Endothelial cell of umbilical vein (primary cell): ENCODE measurements at regions of chr16 and their contacts with region 1.

Region 1: DNA sequence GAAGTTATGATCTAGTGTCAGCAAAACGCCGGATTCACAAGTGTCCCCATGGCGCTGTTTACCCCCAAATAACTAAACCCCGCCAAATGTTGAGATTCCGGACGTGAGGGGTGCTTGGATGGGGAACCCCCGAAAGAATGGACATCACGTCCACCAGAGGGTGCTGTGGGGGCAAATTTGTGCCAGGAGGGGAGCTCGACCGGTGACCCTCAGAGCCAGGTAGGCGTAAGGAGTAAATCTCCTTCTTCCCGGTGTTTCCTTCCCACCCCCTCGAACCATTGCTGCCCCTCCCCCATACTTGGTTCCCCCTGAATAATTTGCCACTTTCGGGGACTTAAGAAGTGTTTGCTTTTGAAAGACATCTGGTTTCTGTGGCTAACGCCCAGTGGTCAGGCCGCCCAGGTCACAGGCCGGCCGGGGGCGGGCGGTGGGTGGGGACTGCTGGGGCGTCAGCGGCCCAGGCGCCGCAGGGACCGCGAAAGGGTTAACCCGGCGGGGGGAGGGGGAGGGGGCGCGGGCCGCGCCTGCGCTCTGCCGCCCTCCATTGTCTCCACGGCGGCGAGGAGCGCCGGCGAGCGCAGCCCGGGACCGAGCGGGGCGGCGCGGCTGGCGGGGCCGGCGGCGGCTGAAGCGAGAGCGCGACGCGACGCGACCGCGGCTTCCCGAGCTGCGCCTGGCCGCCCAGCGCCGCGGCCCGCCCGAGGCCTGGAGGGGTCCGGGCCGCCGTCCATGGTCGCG is at the start of gene ZNRF1:
- DNase-seq: peak; percentile 83
- H3K4me3 ChIP-seq: peak within 1 kb of the TSS; percentile 61 to 82 (median 63)
- H3K27ac ChIP-seq: peak within 1 kb of the TSS; percentile 23
- H3K4me1 ChIP-seq: peaks cover 21% of the 10 kb centered on the region
- H3K27me3 ChIP-seq: no peaks in the 10 kb centered on the region
- CTCF ChIP-seq: peak; percentile 55 to 72
- POLR2A ChIP-seq: peak; percentile 75
- total RNA-seq, gene ZNRF1: 33.2 and 34.9 TPM in 2 replicates

Region 2: DNA sequence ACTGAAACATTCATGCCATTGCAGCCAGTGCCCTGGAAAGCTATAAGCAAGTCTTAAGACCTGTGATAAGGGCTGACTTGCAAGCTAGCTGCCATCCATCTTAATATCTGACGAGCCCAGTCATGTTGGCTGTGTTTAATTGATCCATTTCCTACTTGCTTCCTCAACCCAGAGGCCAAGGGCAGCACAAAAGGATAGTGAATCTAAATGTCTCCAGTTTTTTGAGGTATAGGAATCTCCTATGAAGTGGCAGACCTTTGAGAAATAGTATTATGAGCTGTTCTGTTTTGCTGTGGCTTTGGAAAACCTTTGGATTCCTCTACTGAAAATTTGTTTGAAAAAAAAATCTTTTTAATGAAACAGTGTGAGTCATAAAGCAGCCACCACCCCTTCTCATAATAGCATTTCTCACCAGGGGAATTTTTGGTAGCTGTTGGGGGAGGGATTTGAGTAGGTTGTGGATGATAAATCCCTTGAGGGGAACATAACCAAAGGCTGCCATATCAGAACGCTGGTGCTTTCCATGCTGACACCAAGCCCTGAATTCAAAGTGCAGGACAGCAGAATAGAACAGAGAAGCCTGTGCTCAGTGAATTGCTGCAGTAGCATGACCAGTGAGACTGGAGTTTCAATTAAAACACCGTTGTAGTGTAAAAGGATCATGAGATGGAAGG is 13.1 kb after region 1 on chr16:
- CTCF ChIA-PET with region 1: interaction called, 39 read pairs
- POLR2A ChIA-PET with region 1: no interaction called
- dilution Hi-C with region 1: no loop called
- intact Hi-C with region 1: loop called (anchors 1 kb)
- DNase-seq: peak; percentile 89
- H3K4me3 ChIP-seq: peak overlapping the region in 1 of 3 experiments; percentile 34
- H3K27ac ChIP-seq: peak overlapping the region; percentile 92
- H3K4me1 ChIP-seq: peaks cover 32% of the 10 kb centered on the region
- H3K27me3 ChIP-seq: no peaks in the 10 kb centered on the region
- CTCF ChIP-seq: no peak
- POLR2A ChIP-seq: no peak

Region 3: GRCh38 chr16:75099756-75100602 is 101.3 kb after region 1 on chr16:
- CTCF ChIA-PET with region 1: interaction called, 15 read pairs
- POLR2A ChIA-PET with region 1: no interaction called
- dilution Hi-C with region 1: no loop called
- intact Hi-C with region 1: no loop called
- DNase-seq: peak; percentile 39
- H3K4me3 ChIP-seq: no peak overlapping the region
- H3K27ac ChIP-seq: no peak overlapping the region
- H3K4me1 ChIP-seq: peaks cover 12% of the 10 kb centered on the region
- H3K27me3 ChIP-seq: no peaks in the 10 kb centered on the region
- CTCF ChIP-seq: no peak
- POLR2A ChIP-seq: no peak

Region 4: DNA sequence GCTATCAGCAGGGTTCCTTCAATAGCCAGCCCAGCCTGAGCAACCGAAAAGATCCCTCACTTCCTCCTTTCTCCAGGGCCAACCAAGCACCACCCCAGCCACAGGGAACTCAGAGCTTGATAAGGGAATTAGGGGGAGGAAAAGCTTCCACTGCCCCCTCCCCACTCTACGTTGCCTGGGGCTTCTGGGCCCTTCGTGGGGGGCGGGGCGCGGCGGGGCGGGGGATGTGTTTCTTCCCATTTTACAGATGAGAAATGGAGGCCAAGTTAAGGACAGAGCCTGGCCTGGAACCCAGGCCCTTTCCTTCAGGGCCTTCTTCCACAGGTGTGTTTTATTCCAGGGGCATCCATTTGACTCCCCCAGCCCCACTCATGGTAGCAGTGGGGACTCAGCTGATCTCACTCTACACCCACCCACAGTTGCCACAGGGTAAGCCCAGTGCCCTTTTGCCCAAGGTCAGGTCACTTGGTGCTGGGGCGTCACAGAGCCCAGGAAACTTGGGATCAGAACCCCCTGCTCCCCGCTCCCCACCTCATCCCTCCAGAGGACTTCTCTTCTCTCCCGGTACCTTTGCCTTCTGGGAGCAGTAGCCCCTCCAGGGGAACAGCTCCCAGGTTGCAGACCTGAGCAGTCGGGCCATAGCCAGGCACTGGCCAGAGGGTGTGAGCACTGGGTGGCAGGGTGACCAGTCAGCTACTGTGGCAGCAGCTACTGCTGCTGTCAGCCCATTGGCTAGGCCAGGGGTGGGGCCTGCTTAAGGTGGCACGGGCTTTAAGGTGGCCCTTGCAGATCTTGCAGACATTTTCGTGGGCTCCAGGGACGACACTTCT is 117.6 kb after region 1 on chr16 and contains the start of gene LDHD:
- CTCF ChIA-PET with region 1: interaction called, 317 read pairs
- POLR2A ChIA-PET with region 1: no interaction called
- dilution Hi-C with region 1: no loop called
- intact Hi-C with region 1: loop called (anchors 1 kb)
- DNase-seq: peak; percentile 37
- H3K4me3 ChIP-seq: no peak within 1 kb of the TSS
- H3K27ac ChIP-seq: no peak within 1 kb of the TSS
- H3K4me1 ChIP-seq: peaks cover 4% of the 10 kb centered on the region
- H3K27me3 ChIP-seq: no peaks in the 10 kb centered on the region
- CTCF ChIP-seq: no peak
- POLR2A ChIP-seq: no peak
- total RNA-seq, gene LDHD: not detected in 2 replicates